GM13977 (cell line): ENCODE measurements at regions of chr10 and their contacts with region 1.

Region 1: DNA sequence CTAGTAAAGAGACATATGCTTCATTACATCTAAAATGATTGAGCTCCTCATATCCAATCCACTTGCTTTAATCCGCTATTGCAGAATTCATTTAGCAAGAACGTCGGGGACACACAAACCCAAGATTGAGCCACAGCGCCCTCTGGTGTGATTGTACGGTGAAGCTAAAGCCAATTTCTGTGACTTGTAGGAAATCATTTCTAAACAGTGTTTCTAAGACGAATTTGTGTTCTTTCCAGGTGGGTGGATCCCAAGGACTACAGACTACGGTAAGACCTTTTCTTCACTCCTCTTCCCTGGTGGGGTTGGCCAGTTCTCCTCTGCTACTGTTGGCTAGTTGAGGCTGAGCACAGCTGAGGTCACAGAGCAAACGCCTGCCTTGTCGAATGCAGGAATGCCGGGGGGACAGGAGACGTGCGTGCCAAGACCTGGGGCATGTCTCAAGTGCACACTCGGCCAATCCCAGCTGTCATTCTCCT is 5.2 kb downstream of the DMBT1 start:
- DNase-seq: peak; percentile 59
- CTCF ChIP-seq: peak; percentile 76

Region 2: DNA sequence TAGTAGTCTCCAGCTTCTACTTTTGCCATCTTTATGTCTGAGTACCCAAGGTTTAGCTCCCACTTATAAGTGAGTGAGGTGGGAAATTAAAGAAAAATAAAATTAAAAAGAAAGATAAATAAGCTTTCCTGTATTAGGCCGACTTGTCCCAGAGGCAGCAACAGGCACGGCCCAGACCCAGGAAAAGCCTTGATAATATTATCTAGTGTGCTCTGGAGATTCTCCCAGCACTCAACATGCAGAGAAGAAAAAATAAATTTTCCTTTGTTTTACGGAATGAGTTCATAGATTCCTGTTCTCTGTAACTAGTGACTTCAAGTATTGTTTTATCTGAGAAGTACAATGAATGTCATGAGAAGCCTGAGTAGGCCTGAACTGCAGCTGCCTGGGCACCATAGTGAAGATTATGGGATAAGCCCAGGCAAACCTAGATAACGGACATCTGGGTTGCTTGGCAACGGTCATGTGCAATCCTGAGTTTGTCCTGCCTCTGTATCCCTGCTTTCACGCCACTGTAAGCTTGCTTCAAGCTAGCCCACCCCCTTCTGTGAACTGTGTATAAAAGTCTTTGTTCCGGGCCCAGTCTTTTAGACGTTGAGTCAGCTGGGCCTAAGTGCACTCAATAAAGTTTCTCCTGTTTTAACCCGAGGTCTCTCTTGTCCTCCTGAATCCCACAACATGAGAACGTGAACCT is 644.4 kb before region 1 on chr10:
- in situ Hi-C with region 1: no loop called
- DNase-seq: no peak
- CTCF ChIP-seq: no peak

Region 3: DNA sequence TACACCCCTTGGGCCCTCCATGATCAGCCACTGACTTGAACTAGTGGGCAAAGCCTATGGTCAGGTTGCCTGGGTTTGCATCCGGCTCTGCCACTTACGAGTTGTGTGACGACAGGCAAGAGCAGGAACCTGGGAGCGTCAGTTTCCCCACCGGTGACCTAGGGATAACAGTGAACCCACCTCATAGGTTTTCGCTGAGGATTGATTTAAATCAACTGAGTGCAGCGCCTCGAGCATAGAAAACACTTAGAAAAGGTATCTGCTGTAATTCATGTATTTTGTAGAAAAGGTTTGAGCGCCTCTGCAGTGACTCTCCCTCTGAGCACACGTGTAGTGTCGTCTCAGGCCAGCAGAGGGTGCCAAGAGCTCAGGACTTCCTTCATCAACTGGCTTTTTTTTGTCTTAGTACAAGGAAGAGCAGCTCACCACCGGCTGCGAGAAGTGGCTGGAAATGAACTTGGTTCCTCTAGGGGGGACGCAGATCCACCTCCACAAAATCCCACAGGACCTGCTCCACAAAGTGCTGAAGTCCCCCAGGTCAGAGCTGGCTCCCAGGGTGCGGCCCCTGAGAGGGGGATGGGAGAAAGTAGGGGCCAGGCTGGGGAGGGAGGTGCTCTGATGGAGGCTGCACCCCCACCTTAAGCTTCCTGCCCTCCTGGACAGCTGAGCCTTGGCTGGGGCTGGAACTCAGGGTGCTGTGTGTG is 267.0 kb before region 1 on chr10:
- in situ Hi-C with region 1: loop called (anchors 25 kb)
- DNase-seq: peak; percentile 77
- CTCF ChIP-seq: peak; percentile 90

Region 4: DNA sequence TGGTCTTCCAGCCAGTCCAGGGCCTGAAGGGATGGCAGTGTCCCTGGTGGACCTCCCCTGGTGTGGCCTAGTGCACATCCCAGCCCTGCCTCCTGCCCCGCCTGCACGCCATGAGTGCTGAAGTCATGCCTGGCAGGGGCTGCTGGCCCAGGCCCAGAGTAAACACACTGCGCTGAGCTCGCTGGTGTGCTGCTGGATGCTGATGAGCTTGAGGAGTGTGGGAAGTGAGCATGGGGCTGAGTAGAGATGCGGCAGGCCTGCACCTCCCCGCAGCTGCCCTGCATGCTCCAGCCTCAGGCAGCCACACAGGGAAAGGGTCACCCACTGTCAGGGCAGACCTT is 61.2 kb before region 1 on chr10:
- in situ Hi-C with region 1: no loop called
- DNase-seq: no peak
- CTCF ChIP-seq: no peak

Region 5: GRCh38 chr10:123087786-123088185 is 522.0 kb after region 1 on chr10:
- in situ Hi-C with region 1: no loop called
- DNase-seq: no peak
- CTCF ChIP-seq: no peak